ENCODE measurements at regions of chr1 and their contacts with region 1.

Region 1: DNA sequence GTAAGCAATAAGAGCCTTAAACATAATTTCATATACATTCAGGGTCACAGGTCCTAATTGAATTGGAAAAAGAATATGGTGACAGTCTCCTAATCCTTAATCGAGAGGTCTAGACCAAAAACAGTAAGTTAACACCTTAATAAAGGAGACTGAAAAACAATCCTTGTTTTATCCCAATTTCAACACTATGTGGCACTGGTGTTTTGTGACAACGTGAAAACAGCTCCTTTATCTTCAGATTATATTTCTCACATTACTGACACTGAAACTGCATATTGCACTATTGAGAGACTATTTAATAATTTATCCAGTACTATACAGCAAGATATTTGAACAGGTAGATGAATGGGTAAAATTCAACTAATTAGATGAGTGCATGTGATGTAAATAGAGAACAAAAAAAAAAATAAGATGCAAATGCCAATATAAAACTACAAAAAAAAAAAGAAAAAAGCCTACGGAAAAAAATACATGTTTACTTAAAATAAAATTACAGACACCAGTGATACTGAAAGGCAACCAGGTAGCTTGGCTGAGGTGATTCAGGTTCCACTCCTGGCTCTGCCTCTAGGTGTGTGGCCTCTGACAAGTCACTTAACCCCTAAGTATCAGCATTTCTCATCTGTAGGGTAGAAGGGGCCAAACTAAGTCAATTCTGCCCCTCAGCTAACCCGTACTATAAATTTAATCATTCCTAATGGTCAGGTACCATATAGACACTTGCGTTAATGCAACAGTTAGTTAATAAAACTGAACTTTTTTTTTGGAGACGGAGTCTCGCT is 33.9 kb downstream of the TP53BP2 start:
- DNase-seq: peak; percentile 61
- H3K4me3 ChIP-seq: no peak overlapping the region
- H3K27ac ChIP-seq: no peak overlapping the region
- H3K4me1 ChIP-seq: no peaks in the 10 kb centered on the region
- H3K27me3 ChIP-seq: no peaks in the 10 kb centered on the region
- CTCF ChIP-seq: peak; percentile 63

Region 2: DNA sequence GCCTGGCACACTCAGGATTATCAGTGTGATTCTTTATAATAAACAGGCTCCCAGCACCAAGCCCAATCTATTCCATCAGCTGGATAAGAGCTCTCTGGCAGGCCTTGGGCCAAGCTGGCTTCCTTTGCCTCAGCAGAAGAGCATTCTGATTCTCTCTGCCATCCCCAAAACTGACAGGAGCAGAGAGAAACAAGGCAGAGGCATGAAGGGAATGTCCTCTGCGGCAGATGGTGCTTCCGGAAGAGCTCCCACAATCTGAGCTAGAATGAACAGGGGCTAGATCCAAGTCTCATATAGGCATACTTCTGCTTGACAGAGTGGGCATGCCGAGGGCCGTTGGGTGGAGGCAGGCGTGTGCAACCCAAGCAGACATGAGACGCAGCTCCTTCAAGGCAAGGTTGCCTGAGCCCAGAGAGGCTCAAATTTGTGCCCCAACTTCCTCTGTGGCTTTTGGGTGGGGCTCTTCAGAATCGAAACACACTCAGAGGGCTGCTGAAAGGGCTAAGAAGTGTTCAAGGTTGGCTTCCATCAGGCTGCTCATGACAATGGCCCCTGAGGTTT is 95.4 kb before region 1 on chr1:
- CTCF ChIA-PET with region 1: no interaction called
- POLR2A ChIA-PET with region 1: no interaction called
- intact Hi-C with region 1: no loop called
- DNase-seq: no peak
- H3K4me3 ChIP-seq: no peak overlapping the region
- H3K27ac ChIP-seq: peak overlapping the region; percentile 23
- H3K4me1 ChIP-seq: peaks cover 39% of the 10 kb centered on the region
- H3K27me3 ChIP-seq: no peaks in the 10 kb centered on the region
- CTCF ChIP-seq: no peak

Region 3: GRCh38 chr1:224113918-224114786 is 302.3 kb after region 1 on chr1 and contains the start of gene FBXO28:
- CTCF ChIA-PET with region 1: no interaction called
- POLR2A ChIA-PET with region 1: no interaction called
- intact Hi-C with region 1: loop called (anchors 10 kb)
- DNase-seq: peak; percentile 98
- H3K4me3 ChIP-seq: peak within 1 kb of the TSS; percentile 90
- H3K27ac ChIP-seq: peak within 1 kb of the TSS; percentile 93
- H3K4me1 ChIP-seq: peaks cover 16% of the 10 kb centered on the region
- H3K27me3 ChIP-seq: no peaks in the 10 kb centered on the region
- CTCF ChIP-seq: no peak
- total RNA-seq, gene FBXO28: 39.0 and 45.8 TPM in 2 replicates